Right ventricle myocardium inferior (tissue), 1 donor: ENCODE measurements at regions of chr7 and their contacts with region 1.

Region 1: DNA sequence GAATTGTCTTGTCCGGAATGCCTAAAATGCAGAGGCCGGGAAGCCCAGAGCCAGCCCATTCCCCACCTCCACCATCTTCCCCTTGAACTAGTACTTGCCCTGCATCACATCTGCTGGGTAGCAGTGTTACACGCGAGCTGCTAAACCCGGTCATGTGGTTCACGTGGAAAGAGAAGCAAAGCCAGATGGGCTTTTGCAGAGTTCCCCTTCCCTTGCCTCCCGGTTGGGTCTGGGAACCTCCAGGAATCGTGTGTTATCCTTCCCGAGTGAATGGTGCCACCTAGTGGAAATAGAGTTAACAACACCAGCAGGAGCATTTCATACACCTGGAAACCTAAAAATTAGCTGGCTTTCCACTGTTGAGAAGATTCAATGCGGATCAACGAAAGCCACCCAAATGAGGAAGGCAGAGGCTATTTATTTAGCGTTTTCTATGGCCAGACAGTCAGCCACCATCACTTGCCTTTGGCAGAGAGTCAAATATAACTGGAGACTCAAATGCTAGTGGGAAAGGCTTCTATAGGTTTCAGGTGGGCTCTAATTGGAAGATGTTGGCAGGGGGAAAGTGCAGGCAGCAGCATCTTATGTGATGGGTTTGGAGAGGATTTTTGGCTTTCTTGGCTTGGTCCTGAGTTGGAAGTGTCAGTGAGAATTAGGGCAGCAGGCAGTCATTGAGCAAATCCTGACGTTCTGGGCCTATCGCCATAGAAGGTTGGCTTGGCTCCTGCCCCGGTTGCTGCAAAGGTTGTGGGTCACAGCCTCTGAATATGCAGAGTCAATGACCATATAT is 12.9 kb upstream of the DENND2A start:
- DNase-seq: no peak
- ATAC-seq: peak; percentile 66

Region 2: DNA sequence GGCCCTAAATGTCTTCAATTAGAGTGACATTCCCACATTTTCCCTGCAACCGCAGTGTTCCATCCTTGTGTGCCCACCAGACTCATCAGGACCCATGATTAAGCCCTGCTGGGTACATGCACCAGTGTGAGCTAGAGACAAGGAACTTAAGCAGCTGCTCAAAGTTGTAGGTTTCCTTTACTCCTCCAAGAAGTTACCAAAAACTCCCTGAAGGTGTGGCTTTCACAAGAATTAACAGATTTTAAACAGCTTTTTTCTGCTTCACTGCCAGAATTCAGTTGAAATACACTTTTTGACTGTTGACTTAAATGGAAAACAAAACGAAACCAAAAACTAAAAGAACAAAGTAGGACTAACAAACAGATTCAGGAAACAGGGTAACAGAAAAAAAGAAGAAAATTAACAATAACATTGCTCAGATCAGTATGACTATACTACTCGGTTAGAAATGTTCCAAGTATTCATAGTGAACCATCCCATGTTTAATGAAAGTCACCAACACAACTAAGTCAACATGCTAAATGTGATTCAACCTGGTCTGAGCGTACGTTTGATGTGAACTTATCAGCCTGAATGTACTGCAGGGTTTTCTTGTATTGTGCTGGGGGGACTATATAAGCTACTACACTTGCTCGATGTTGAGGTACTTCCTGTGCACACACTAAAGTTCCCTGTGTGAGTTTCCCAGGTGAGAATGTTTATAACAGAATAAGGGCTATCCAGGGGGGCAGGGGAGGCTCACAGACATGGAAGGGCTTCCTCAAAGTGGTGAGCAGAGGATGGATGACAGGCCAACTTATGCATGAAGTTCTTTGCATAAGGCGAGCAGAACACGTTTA is 277.4 kb before region 1 on chr7:
- intact Hi-C with region 1: no loop called
- DNase-seq: no peak
- ATAC-seq: no peak

Region 3: DNA sequence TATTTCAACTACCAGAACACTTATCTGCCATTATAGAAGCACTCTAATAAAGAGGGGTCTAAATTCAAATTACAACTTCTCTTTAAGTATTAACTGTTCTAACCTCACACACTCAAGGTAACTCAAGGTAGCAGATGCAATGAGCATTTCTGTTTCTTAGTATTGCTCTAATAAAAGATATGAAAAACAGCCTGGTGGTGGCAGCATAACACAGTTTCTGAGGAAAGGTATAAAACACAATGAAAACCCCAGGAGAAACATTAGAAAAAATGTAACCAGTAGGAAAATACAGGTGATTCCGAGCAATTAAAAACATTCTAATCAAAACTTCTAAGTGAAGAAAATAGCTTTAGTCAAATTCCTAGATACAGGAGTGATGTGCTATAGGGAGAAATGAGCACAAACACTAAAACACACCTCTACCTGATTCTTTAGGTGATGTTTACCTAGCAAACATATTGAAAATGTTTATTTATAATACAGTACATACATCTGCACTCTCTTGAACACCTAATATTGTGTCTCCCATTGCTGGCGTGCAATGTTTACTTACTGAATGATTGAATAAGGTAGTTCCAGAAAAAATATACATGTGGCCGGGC is 177.7 kb before region 1 on chr7:
- intact Hi-C with region 1: loop called (anchors 2 kb)
- DNase-seq: no peak
- ATAC-seq: no peak

Region 4: DNA sequence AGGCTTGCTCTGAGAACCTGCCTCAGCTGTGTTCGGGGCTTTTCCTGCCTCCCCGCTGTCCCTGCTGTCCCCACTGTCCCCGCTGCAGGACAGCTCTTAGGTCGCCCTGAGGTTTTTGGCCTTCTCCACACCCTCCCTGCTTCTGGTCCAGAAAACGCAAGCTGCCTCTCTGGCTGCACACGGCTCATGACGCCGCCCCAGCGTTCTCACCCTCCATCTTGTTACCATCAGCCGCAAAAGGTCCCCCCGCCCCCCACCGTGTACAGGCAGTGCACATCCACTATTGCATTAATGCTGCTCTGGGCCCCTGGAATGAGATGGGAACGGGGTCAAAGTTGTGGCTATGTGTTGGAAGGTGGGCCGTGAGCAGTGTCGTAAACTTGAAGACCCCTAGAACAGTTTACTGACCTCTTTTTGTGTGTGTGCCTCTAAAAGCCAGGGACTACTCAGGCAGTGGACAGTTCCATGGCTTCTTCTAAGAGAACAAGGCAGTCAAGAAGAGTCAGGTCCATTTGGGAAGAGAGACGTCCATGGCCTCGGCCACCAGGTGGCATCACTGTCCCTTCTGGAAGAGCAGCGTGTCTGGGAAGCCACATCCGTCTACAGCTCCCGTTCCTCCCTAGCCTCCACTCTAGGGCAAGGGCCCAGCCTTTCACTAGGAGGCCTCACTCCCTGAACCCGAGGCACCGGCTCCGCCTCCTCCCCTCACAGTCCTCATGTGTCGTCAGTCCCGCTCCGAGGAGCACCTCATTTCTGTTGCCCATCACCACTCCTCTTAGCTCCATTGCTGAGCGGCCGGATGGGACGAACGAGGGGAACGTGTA is 135.8 kb before region 1 on chr7:
- intact Hi-C with region 1: loop called (anchors 1 kb)
- DNase-seq: peak; percentile 93
- ATAC-seq: peak; percentile 91